Activated naive CD4-positive, alpha-beta T cell treated with anti-CD3 and anti-CD28 coated beads, Interleukin-2, amount 10 ng/mL, durations not matched to agents 7 days and 5 days (primary cell): ENCODE measurements at regions of chr2 and their contacts with region 1.

Region 1: DNA sequence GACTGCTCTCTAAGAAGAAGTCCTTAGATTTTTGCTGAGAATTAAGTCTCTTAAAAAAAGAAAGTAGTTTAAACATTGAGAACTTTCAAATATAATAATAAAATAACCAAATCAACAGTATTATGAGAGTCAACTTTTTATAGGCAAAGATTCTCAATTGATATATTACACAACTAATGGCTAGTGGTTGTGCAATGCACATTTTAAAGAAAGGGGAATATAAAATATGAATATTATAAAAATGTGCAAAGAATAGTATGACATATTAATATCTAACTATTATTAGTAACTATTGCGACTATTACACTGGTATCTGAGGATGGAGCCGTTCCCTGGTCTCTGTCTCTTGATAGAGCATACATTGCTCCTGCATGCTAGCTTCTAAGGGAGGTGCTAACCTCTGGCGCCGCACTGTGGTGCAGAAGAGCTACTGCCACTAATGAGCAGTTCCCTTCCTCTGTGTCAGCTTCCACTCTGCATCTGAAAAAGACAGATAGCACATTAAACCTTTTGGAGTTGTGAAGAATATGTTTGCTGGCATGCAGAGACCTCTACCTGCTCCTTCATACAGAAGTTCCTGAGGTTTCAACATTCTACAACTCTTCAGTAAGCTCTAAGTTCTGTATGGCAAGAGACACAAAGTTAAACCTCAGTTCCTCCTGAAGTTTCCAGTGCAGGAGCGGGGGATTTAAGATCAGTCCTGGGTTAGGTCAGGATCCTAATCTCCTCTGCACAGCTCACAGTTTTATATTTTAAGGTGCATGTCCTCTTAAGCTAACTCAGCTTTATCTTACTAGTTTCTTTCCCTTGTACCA is 3.5 kb upstream of the SLC9A2 start:
- DNase-seq: peak; percentile 63
- H3K4me3 Mint-ChIP-seq: no peak overlapping the region
- H3K27ac Mint-ChIP-seq: no peak overlapping the region
- H3K4me1 Mint-ChIP-seq: peaks cover 11% of the 10 kb centered on the region
- H3K27me3 Mint-ChIP-seq: peaks cover 45% of the 10 kb centered on the region

Region 2: GRCh38 chr2:102703748-102704147 is 87.9 kb after region 1 on chr2:
- CTCF ChIA-PET with region 1: interaction called, 13 read pairs
- DNase-seq: peak; percentile 24
- H3K4me3 Mint-ChIP-seq: no peak overlapping the region
- H3K27ac Mint-ChIP-seq: no peak overlapping the region
- H3K4me1 Mint-ChIP-seq: no peaks in the 10 kb centered on the region
- H3K27me3 Mint-ChIP-seq: peaks cover 21% of the 10 kb centered on the region